ENCODE measurements at regions of chr5 and their contacts with region 1.

Region 1: DNA sequence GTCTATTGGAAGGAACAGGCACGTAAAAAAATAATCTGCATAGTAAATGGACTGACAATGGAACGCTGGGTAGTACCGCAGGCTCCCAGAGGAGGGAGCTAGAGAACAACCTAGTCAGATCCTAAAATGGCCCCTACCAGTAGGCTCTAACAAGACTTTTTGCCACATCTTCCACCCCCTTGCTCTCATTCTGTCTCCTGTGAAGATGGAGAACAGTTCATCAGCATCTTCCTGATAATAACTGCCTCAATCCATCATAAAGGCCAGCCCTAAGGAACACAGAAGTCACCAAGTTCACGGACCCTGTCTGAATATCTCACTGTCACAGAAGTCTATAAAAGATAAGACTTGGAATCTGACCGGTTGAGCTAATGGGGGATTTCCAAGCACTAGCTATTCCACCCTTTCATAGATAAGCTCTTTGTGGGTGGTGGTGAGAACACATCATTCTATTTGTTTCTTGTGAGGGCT is 133.4 kb downstream of the SLC1A3 start:
- DNase-seq: peak; percentile 54
- H3K4me3 Mint-ChIP-seq: no peak overlapping the region
- H3K27ac Mint-ChIP-seq: no peak overlapping the region
- H3K4me1 Mint-ChIP-seq: peaks cover 12% of the 10 kb centered on the region
- H3K27me3 Mint-ChIP-seq: peaks cover 29% of the 10 kb centered on the region

Region 2: GRCh38 chr5:36870399-36871040 is 130.7 kb after region 1 on chr5:
- intact Hi-C with region 1: loop called (anchors 1 kb)
- DNase-seq: no peak
- H3K4me3 Mint-ChIP-seq: peak overlapping the region; percentile 10
- H3K27ac Mint-ChIP-seq: peak overlapping the region; percentile 22
- H3K4me1 Mint-ChIP-seq: peaks cover 29% of the 10 kb centered on the region
- H3K27me3 Mint-ChIP-seq: no peaks in the 10 kb centered on the region

Region 3: DNA sequence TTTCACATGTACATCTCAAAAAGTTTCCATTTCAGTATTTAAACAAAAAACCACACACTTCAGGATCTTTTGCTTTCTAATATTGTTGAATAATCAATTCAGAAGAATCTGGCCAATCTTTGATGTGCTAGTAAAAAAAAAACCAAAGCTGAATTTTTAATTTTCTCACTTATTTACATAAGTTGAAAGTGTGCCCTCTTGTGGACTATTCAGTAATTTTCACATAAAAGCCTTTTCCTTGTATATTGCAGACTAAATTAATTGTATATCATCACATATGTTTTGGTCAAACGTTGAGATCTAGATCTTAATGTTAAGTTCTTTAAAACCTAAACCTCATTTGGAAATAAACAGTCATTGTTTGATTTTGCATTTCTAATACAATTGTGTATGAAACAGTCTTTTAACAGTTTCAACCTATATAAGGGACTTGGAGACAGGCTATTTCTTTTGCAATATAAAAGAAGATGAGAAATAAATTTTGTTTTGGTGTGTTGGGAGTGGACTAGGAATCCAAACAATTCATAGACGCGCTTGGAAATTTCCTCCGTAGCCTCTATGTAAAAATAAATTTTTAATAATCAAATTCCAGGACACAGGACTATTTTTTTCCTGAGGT is 204.9 kb after region 1 on chr5:
- intact Hi-C with region 1: loop called (anchors 2 kb)
- DNase-seq: no peak
- H3K4me3 Mint-ChIP-seq: no peak overlapping the region
- H3K27ac Mint-ChIP-seq: no peak overlapping the region
- H3K4me1 Mint-ChIP-seq: peaks cover 10% of the 10 kb centered on the region
- H3K27me3 Mint-ChIP-seq: no peaks in the 10 kb centered on the region

Region 4: GRCh38 chr5:37005946-37006540 is 266.3 kb after region 1 on chr5:
- intact Hi-C with region 1: loop called (anchors 2 kb)
- DNase-seq: no peak
- H3K4me3 Mint-ChIP-seq: no peak overlapping the region
- H3K27ac Mint-ChIP-seq: no peak overlapping the region
- H3K4me1 Mint-ChIP-seq: no peaks in the 10 kb centered on the region
- H3K27me3 Mint-ChIP-seq: no peaks in the 10 kb centered on the region

Measured in activated T-helper 2 cell treated with anti-CD3 and anti-CD28 coated beads, Interferon-gamma antibody, Interleukin-2, Interleukin-4, amounts not matched to agents 10 μg/mL and 5 μg/mL and 100 μg/mL, durations not matched to agents 14 hours and 24 hours and 36 hours (primary cell).